ENCODE measurements at regions of chr11 and their contacts with region 1.

Region 1: DNA sequence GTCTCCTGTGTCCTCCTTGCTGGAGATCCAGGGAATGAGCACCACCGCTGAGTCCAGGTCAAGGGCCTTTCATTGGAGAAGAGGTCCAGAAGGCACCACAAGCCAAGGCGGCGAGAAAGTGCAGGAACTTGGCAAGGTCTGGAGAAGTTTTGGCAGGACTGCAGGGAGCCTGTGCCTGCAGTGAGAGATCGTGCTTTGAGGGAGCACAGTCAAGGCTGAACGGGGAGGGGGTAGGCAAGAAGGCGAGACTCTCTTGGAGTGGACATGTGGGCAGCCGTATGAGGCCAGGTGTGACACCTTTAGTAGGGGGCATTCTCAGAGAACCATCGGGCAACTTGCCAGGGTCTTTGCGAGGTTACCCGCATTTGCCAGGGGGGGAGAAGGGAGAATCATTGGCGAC is 30.5 kb downstream of the LRRC10B start:
- DNase-seq: peak in 1 of 2 donors; percentile 29
- ATAC-seq: peak in 4 of 8 donors; percentile 16 to 51 (median 24)
- H3K4me3 ChIP-seq: no peak overlapping the region
- H3K27ac ChIP-seq: no peak overlapping the region
- H3K4me1 ChIP-seq: peaks cover 0 to 53% (median 25%) of the 10 kb centered on the region in 9 donors
- H3K27me3 ChIP-seq: no peaks in the 10 kb centered on the region
- CTCF ChIP-seq: no peak

Region 2: DNA sequence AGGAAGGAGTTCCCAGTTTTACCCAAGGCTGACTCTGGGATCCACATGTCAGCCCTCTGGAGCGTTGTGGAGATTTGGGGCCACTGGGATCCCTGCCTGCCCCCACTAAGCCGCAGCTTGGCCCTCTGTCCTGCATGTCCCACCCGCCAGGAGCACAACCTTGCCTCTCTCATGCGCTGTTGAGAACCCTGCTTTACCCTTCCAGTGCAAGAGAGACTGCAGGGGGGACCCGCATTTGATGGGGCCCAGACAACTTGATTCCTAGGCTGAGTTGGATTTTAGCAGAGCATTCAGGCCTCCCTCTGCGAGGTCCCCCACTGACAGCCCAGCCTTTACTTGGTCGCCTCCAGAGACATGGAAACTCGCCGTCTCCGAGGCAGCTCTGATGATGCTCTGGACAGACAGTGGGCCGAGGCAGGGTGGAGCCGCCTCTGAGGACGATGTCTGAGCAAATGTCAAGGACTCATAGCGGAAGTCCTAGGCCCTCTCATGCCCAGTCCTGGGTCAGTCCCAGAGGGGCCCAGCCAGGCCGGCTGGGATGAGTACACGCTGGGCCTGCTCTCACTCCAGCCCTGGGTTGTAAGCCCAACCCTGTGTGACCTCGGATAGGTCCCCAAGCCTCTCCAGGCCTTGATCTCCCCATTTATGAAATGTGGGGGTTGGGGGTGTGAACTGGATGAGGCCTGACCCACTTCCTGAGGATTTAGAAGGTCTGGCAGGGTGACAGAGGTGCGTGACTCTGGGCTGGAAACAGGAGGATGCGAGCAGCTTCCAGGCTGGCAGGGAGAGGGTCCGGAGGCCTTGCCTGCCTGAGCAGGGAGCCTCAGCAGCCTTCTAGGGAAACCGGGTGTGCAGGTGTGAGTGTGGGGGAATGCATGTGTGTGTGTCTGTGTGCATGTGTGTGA is 436.1 kb before region 1 on chr11:
- intact Hi-C with region 1: no loop called
- DNase-seq: no peak
- ATAC-seq: peak in 1 of 8 donors; percentile 27
- H3K4me3 ChIP-seq: peak overlapping the region in 1 of 10 donors; percentile 53
- H3K27ac ChIP-seq: peak overlapping the region in 1 of 10 donors; percentile 85
- H3K4me1 ChIP-seq: no peaks in the 10 kb centered on the region
- H3K27me3 ChIP-seq: no peaks in the 10 kb centered on the region
- CTCF ChIP-seq: no peak

Region 3: GRCh38 chr11:61574611-61575010 is 35.6 kb after region 1 on chr11:
- intact Hi-C with region 1: loop called in 4 of 10 experiments (anchors 5 kb)
- DNase-seq: no peak
- ATAC-seq: no peak
- H3K4me3 ChIP-seq: no peak overlapping the region
- H3K27ac ChIP-seq: no peak overlapping the region
- H3K4me1 ChIP-seq: peaks cover 0 to 68% (median 25%) of the 10 kb centered on the region in 9 donors
- H3K27me3 ChIP-seq: peaks cover 0 to 13% (median 0%) of the 10 kb centered on the region in 7 donors
- CTCF ChIP-seq: no peak

Region 4: DNA sequence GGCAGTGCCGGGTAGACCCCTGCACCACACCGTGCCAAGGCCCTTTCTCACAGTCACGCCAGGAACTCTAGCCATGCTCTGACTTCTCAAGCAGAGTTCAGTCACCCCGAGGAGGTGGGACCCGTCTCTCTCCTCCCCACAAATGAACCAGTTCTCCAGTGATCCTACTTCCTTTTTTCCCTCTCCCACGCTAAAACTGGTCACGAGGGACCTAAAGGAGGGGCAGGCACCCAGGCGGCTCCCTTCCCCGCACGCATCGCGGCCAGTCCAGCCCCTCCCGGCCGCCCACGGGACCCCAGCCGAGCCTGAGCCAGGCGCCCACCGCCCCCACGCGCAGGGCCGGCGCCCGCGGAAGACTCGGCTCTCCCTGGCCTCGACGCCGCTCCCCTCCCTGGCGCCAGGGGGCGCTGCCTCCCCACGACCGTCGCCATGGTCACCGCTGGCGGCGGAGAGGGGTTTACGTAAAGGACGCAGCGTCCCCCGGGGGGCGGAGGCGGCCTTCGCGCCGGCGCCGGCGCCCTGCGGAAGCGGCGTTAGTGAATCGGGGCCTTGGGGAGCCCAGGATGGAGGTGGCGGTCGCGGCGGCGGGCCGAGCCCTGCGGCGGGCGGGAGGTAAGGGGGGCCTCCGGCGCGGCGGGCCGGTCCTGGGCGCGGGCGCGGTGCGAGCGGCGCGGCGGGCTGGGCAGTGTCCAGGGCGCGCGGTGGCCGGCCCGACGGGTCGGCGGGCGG is 141.1 kb after region 1 on chr11 and contains the start of gene DAGLA:
- intact Hi-C with region 1: no loop called
- DNase-seq: peak; percentile 54 to 82
- ATAC-seq: peak; percentile 47 to 86 (median 74)
- H3K4me3 ChIP-seq: peak within 1 kb of the TSS in 9 of 10 donors; percentile 42 to 63 (median 57)
- H3K27ac ChIP-seq: peak within 1 kb of the TSS in 5 of 10 donors; percentile 44 to 79 (median 50)
- H3K4me1 ChIP-seq: peaks cover 4 to 49% (median 35%) of the 10 kb centered on the region in 9 donors
- H3K27me3 ChIP-seq: peaks cover 0 to 28% (median 0%) of the 10 kb centered on the region in 7 donors
- CTCF ChIP-seq: peak; percentile 92 to 100 (median 97)
- total RNA-seq, gene DAGLA: 1.8 to 5.0 (median 3.4) TPM

Measured in heart right ventricle (tissue), 16 donors.